ENCODE measurements at regions of chr1 and their contacts with region 1.

Region 1: GRCh38 chr1:197924516-197925123 is 7.4 kb downstream of the LHX9 start:
- DNase-seq: peak in 1 of 2 donors; percentile 27
- ATAC-seq: peak in 3 of 8 donors; percentile 57 to 73 (median 67)
- H3K4me3 ChIP-seq: no peak overlapping the region
- H3K27ac ChIP-seq: no peak overlapping the region
- H3K4me1 ChIP-seq: peaks cover 0 to 19% (median 4%) of the 10 kb centered on the region in 9 donors
- H3K27me3 ChIP-seq: peaks cover 14 to 99% (median 85%) of the 10 kb centered on the region in 7 donors
- CTCF ChIP-seq: peak; percentile 35 to 82 (median 73)

Region 2: DNA sequence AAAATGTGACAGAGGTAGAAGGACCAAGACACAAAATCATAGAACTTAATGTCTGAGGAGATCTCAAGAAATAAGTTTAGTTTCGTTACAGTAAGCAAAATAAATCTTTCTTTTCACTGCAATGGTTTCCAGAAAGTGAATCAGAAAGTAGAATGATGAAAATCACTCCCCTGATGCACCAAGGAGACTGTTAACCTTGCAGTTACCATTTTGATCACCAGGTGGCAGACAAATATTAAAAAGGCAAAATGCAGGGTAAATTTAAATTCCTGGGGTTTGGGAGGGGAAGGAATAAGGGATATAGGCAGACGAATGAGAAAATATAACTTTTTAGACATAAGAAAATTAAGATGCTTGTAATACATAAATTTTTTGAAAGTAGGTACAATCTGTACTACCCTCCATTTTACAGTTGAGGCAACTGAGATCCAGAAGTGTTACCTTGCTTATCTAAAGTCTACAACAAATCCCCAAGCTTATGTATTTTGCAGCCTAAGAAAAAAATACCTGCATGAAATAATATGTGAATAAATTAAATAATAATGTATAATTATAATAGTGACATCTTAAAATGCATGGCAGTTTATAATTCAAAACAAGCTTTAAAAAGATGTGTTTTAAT is 403.4 kb before region 1 on chr1:
- intact Hi-C with region 1: loop called in 9 of 10 experiments (anchors 5 to 10 kb)
- DNase-seq: no peak
- ATAC-seq: no peak
- H3K4me3 ChIP-seq: no peak overlapping the region
- H3K27ac ChIP-seq: no peak overlapping the region
- H3K4me1 ChIP-seq: peaks cover 0 to 8% (median 0%) of the 10 kb centered on the region in 9 donors
- H3K27me3 ChIP-seq: no peaks in the 10 kb centered on the region
- CTCF ChIP-seq: peak in 8 of 9 donors; percentile 26 to 68 (median 57)

Region 3: DNA sequence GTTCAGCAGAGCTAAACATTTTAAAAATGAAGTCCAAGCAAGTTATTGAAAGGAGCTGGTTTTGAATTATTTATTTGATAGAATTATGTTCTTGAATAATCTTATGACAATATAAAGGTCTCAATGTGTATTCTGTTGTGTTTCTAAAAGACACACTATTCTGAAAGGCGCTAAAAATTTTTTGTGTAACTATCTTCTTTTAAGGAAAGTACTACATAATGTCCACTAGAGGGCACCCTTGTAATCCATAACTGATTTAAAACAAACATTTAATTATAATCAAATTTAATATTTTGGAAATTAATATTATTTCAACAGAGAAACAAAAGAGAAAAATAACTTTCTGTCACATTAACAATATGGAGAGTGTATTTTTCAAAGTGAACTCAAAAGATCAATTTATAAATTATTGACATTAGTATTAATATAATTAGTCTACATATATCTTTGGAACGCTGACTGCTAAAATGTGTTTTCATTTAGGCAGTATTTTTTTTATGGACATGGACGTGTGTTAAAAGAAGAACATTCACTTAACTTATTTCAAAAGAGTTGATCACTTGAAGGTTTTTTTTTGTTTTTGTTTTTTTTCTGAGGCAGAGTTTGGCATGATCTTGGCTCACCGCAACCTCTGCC is 397.8 kb before region 1 on chr1:
- intact Hi-C with region 1: loop called in 9 of 10 experiments (anchors 5 to 10 kb)
- DNase-seq: no peak
- ATAC-seq: no peak
- H3K4me3 ChIP-seq: no peak overlapping the region
- H3K27ac ChIP-seq: no peak overlapping the region
- H3K4me1 ChIP-seq: no peaks in the 10 kb centered on the region
- H3K27me3 ChIP-seq: no peaks in the 10 kb centered on the region
- CTCF ChIP-seq: peak; percentile 62 to 85 (median 78)